ENCODE measurements at regions of chr15 and their contacts with region 1.

Region 1: DNA sequence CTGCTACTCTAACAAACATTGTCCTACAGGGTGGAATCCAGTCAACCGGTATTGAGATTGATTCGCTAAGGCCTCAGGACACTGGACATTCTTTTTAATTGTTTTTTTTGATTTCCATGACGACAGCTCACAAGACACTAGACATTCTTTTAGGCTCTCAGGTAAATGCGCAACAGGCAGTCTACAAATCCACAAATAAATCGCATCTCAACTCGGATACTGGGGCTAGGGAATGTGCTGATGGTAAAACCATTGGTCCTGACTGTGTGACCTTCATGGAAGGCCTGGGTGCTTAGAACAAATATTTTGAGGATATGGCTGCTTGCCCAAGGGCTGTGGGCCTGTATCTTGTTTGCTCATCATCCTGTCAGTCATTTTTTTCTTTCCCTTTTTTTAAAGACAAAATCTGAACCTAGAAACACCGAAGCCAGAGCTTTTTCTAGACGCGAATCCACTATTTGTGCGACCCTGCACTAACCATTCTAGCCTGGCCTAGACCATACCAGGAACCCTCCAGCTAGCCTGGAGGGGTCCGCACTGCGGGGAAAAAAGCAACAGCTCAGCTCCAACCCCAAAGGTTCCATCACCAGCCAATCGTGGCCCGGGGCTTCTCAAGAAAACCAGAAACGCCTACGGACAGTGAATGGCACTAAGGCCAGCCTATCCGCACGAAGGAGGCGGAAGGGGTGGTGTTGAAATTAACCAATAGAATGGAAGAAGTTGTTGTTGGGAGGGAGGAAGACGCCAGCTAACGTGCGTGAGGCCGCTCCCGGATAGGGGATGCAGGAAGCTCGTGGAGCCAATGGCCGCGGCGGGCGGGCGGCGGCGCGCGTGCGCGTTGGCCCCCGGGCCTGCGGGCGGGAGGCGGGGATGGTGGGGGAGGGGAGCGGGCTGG is 18.1 kb upstream of the CHD2 start:
- DNase-seq: peak; percentile 100
- H3K4me3 Mint-ChIP-seq: peak overlapping the region; percentile 95
- H3K27ac Mint-ChIP-seq: peak overlapping the region; percentile 98
- H3K4me1 Mint-ChIP-seq: peaks cover 51% of the 10 kb centered on the region
- H3K27me3 Mint-ChIP-seq: no peaks in the 10 kb centered on the region

Region 2: DNA sequence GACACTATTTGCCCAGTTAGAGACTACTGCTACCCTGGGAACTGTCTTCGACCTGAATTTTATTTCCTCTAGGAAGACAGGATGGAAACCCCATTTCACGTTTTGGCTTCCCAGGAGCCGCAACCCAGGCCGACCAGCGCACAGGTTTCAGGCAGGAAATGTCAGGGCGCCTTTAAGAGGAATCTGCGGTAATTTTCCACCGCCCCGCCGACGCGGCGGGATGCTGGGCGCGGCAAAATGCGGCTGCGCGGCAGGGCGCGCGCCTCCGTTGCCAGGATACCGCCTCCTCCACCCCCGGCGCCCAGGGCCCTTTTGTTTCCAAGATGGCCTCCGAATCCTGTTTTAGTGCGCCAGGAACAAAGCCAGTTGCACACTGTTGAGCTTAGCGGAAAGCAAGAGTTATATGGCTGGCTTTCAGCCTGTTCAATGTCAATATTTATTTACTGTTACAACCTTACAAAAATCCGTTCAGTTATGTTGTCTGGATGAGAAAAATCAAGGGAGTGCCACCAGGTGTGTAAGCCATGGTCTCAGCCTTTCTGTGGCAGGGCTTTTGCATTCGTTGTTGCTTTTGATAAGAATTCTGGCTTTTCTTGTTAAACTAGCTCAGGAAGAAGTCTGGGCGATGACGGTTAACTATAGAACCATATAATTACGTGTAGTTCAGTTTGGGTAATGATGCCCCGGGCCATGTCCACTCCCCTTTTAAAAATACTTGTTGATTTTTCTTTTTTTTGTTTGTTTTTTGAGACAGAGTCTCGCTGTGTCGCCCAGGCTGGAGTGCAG is 61.6 kb before region 1 on chr15:
- CTCF ChIA-PET with region 1: no interaction called
- intact Hi-C with region 1: loop called (anchors 2 kb)
- DNase-seq: peak; percentile 91
- H3K4me3 Mint-ChIP-seq: peak overlapping the region; percentile 79
- H3K27ac Mint-ChIP-seq: peak overlapping the region; percentile 98
- H3K4me1 Mint-ChIP-seq: peaks cover 73% of the 10 kb centered on the region
- H3K27me3 Mint-ChIP-seq: no peaks in the 10 kb centered on the region

Region 3: DNA sequence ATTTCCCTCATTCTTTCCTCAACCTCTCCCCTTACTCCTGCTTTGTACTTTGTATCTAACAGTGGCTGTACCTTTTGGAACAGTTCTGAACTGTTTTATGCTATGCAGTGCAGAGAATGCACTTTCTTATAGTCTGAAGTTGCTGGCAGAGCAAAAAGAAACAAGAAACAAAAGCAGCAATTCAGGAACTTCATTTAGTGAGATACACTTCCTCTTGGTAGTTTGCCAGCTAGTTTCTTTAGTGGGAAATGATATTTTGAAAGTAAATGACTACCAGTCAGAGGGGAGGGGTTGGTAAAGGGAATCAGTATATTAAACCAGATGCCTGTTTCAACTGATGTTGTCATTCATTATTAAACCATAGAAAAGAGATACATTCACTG is 36.9 kb before region 1 on chr15:
- CTCF ChIA-PET with region 1: interaction called, 6 read pairs
- intact Hi-C with region 1: loop called (anchors 1 kb)
- DNase-seq: no peak
- H3K4me3 Mint-ChIP-seq: peak overlapping the region; percentile 71
- H3K27ac Mint-ChIP-seq: peak overlapping the region; percentile 96
- H3K4me1 Mint-ChIP-seq: peaks cover 85% of the 10 kb centered on the region
- H3K27me3 Mint-ChIP-seq: no peaks in the 10 kb centered on the region

Measured in activated naive CD4-positive, alpha-beta T cell treated with anti-CD3 and anti-CD28 coated beads for 36 hours (primary cell).